SK-N-SH (cell line): ENCODE measurements at regions of chr7 and their contacts with region 1.

Region 1: DNA sequence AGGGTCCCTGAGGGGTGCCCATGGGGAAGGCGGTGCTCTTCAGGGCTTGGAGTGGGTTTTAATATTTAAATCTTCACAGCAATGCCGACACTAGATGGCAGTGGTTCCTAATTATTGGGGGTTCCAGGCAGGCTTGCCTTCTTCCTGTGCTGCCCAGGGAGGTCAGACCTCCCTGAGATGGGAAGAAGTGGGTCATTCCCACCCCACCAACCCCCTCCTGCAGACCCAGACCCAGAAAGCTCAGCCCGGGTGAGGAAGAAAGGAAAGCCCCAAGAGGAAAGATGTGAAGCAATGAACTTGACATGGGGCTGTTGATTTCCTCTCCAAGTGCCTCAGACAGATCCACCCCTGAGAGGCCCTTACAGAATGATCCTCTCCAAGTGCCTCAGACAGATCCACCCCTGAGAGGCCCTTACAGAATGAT is 85.1 kb upstream of the LANCL2 start:
- DNase-seq: peak; percentile 81
- H3K4me3 ChIP-seq: no peak overlapping the region
- H3K27ac ChIP-seq: no peak overlapping the region
- H3K4me1 ChIP-seq: no peaks in the 10 kb centered on the region
- H3K27me3 ChIP-seq: no peaks in the 10 kb centered on the region
- CTCF ChIP-seq: peak; percentile 95
- EP300 ChIP-seq: no peak
- RAD21 ChIP-seq: peak; percentile 98

Region 2: DNA sequence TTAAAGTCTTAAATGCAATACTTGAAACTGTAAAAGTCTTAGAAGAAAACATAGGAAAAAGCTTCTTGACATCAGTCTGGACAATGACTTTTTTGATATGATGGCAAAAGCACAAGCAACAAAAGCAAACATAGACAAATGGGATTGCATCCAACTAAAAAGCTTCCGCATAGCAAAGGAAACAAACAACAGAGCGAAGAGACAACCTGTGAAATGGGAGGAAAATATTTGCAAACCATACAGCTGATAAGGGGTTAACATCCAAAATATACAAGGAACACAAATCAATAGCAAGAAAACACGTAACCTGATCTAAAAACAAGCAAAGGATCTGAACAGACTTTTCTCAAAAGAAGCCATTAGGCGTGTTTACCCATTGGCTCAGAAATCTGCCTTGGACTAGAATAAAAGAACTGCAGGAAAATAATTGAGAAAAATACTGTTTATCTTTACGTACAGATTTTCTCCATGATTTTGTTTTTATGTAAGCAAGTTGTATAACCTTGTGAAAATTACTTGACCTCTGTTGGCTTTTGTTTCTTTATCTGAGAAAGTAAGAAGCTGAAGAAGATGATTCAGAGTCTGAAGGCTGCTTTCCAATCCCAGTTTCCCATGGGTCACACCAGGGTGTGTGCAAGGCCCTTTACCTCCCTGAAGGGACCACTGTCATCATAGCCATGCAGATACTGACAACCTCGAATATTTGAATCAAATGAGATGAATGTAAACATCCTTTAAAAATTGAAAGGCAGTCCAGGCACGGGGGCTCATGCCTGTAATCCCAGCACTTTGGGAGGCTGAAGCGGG is 14.0 kb before region 1 on chr7:
- CTCF ChIA-PET with region 1: interaction called, 32 read pairs
- POLR2A ChIA-PET with region 1: no interaction called
- DNase-seq: no peak
- H3K4me3 ChIP-seq: no peak overlapping the region
- H3K27ac ChIP-seq: no peak overlapping the region
- H3K4me1 ChIP-seq: no peaks in the 10 kb centered on the region
- H3K27me3 ChIP-seq: peaks cover 5% of the 10 kb centered on the region; the same call in 1 of the 2 replicates
- CTCF ChIP-seq: no peak
- EP300 ChIP-seq: no peak
- RAD21 ChIP-seq: no peak

Region 3: DNA sequence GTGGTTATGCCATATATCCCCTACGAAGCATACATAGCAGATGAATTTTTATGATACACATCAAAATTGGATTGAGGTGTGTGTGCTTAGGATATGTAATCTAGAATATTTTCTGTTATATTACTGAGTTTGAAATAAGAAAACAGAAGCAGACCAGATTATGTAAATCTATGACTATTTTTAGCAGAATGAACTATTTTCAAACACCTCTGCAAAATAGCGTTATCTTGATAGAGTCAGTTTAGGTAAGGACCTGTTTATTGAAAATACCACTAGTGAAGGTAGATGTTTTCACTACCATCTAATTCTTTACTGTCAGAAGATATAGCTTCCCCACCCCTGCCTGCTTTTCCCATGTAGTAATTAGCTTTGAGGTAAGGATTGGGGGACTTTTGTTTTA is 94.2 kb after region 1 on chr7:
- CTCF ChIA-PET with region 1: interaction called, 16 read pairs
- POLR2A ChIA-PET with region 1: no interaction called
- DNase-seq: no peak
- H3K4me3 ChIP-seq: no peak overlapping the region
- H3K27ac ChIP-seq: no peak overlapping the region
- H3K4me1 ChIP-seq: peaks cover 0 to 10% of the 10 kb centered on the region in 2 experiments; a peak in 2 of 4 replicates
- H3K27me3 ChIP-seq: no peaks in the 10 kb centered on the region
- CTCF ChIP-seq: no peak
- EP300 ChIP-seq: no peak
- RAD21 ChIP-seq: no peak

Region 4: GRCh38 chr7:55415173-55415778 is 135.2 kb after region 1 on chr7:
- CTCF ChIA-PET with region 1: interaction called, 166 read pairs
- POLR2A ChIA-PET with region 1: no interaction called
- DNase-seq: peak; percentile 88
- H3K4me3 ChIP-seq: no peak overlapping the region
- H3K27ac ChIP-seq: no peak overlapping the region
- H3K4me1 ChIP-seq: peaks cover 0 to 5% of the 10 kb centered on the region in 2 experiments; a peak in 1 of 4 replicates
- H3K27me3 ChIP-seq: no peaks in the 10 kb centered on the region
- CTCF ChIP-seq: peak; percentile 96
- EP300 ChIP-seq: no peak
- RAD21 ChIP-seq: peak; percentile 84

Region 5: DNA sequence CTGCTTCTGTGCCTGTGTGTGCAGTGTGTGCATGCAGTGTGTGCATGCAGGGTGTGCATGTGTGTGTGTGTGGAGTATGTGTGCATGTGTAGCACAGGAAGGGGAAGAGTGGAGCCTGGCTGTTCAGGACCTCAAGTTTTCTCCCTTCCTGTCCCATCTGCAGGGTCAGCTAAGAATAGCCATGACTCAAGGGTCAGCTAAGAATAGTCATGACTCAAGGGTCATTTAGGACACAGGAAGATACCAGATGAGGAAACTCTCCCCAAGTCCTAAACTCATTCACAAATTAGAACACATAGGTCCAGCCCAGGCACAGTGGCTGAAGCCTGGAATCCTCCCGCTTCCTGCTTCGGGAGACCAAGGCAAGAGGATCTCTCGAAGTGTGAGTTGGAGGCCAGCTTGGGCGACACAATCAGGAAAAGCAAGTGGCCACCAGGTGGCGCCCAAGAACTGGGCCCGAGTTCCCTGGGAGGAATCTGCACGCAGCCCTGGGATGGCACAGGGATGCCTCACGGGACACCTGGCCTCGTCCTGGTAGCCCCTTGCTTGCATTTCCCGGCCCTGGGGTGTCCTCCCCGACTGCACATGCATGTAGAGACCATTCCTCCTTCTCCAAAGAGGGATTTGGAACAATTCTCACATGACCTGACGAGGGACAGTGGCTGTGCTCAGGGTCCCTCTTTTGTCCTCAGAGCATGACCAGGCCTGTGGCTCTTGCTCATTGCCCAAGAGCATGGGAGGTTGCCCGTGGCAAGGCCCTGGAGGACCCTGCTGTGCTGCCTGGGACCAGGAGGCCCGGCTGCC is 313.7 kb after region 1 on chr7:
- CTCF ChIA-PET with region 1: interaction called, 11 read pairs
- POLR2A ChIA-PET with region 1: no interaction called
- DNase-seq: peak; percentile 80
- H3K4me3 ChIP-seq: no peak overlapping the region; a peak in 1 of 4 replicates
- H3K27ac ChIP-seq: no peak overlapping the region
- H3K4me1 ChIP-seq: no peaks in the 10 kb centered on the region; a peak in 1 of 4 replicates
- H3K27me3 ChIP-seq: peaks cover 7% of the 10 kb centered on the region; the same call in 1 of the 2 replicates
- CTCF ChIP-seq: peak; percentile 97
- EP300 ChIP-seq: no peak
- RAD21 ChIP-seq: peak; percentile 75